Vagina (tissue), 2 donors: ENCODE measurements at regions of chr13 and their contacts with region 1.

Region 1: GRCh38 chr13:36685927-36686326 is 12.1 kb downstream of the SERTM1 start:
- DNase-seq: no peak
- H3K4me3 ChIP-seq: no peak overlapping the region
- H3K27ac ChIP-seq: no peak overlapping the region
- H3K4me1 ChIP-seq: peaks cover 6% of the 10 kb centered on the region
- H3K27me3 ChIP-seq: no peaks in the 10 kb centered on the region
- CTCF ChIP-seq: no peak
- POLR2A ChIP-seq: no peak

Region 2: GRCh38 chr13:38514575-38514974 is 1828.6 kb after region 1 on chr13:
- intact Hi-C with region 1: loop called (anchors 5 kb)
- DNase-seq: no peak
- H3K4me3 ChIP-seq: no peak overlapping the region
- H3K27ac ChIP-seq: no peak overlapping the region
- H3K4me1 ChIP-seq: no peaks in the 10 kb centered on the region
- H3K27me3 ChIP-seq: no peaks in the 10 kb centered on the region
- CTCF ChIP-seq: no peak
- POLR2A ChIP-seq: no peak